Calu3 (cell line): ENCODE measurements at regions of chr12 and their contacts with region 1.

Region 1: DNA sequence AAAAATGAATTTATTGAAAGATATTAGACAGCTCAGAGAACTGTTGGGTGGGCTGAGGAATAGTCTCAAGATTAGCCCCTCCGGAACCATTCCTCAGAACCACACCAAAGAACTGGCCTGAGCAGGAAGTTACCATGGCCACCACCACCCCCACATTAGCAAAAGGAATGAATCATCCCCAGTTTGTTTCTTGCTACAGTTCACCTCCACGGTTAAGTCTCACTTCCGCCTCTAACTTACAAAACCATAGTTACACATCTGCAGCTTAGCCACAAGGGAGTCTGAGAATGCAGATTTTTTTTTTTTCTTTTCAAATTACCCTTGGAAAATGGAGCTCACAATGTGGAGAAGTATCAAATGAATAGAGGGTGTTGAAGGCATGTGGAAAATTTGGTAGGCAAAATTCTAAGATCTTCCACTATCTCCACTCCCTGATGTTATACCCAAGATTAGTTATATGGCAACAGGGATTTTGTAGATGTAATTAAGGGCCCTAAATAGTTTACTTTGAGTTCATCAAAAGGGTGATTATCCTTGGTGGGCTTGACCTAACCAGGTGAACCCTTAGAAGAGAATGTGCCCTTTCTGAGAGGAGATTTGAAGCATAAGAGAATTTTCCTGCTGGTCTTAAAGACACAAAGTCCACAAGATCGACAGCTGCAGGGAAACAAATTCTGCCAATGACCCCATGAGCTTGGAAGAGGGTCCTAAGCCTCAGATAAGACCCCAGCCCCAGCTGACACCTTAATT is 129.8 kb upstream of the KRR1 start:
- DNase-seq: peak; percentile 83
- H3K4me3 Mint-ChIP-seq: peak overlapping the region; percentile 46
- H3K27ac Mint-ChIP-seq: peak overlapping the region; percentile 99
- H3K4me1 Mint-ChIP-seq: peaks cover 72% of the 10 kb centered on the region
- H3K27me3 Mint-ChIP-seq: no peaks in the 10 kb centered on the region
- CTCF ChIP-seq: no peak

Region 2: GRCh38 chr12:75656650-75657049 is 15.4 kb after region 1 on chr12:
- CTCF ChIA-PET with region 1: interaction called, 6 read pairs
- intact Hi-C with region 1: loop called (anchors 2 kb)
- DNase-seq: peak; percentile 85
- H3K4me3 Mint-ChIP-seq: no peak overlapping the region
- H3K27ac Mint-ChIP-seq: no peak overlapping the region
- H3K4me1 Mint-ChIP-seq: peaks cover 43% of the 10 kb centered on the region
- H3K27me3 Mint-ChIP-seq: no peaks in the 10 kb centered on the region
- CTCF ChIP-seq: no peak

Region 3: DNA sequence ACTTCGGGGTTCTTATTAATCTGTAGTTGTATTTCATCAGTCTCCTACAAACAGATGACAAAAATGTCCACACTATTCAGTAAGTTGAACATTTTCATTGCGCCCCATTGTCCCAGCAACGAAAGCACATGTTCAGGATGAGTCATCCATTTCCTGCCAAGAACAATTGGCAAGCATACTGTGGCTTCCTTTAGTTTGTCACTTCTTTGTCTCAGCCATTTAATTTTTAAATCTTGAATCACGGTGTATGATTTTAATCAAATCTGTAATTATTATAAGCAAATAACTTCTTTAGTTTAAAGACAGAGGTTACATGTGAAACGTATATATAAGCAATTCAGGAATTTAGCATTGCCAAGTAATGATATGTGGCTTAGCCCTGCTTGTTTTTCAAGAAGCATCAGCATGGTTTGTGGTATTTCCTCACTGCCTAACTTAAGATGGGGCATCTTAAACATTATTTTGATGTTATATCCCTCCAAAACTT is 81.6 kb after region 1 on chr12:
- CTCF ChIA-PET with region 1: interaction called, 3 read pairs
- intact Hi-C with region 1: loop called (anchors 2 kb)
- DNase-seq: peak; percentile 48
- H3K4me3 Mint-ChIP-seq: peak overlapping the region; percentile 3
- H3K27ac Mint-ChIP-seq: peak overlapping the region; percentile 94
- H3K4me1 Mint-ChIP-seq: peaks cover 64% of the 10 kb centered on the region
- H3K27me3 Mint-ChIP-seq: no peaks in the 10 kb centered on the region
- CTCF ChIP-seq: no peak

Region 4: GRCh38 chr12:75944097-75944904 is 303.1 kb after region 1 on chr12:
- CTCF ChIA-PET with region 1: interaction called, 3 read pairs
- intact Hi-C with region 1: loop called (anchors 5 kb)
- DNase-seq: peak; percentile 44
- H3K4me3 Mint-ChIP-seq: peak overlapping the region; percentile 57
- H3K27ac Mint-ChIP-seq: peak overlapping the region; percentile 87
- H3K4me1 Mint-ChIP-seq: peaks cover 34% of the 10 kb centered on the region
- H3K27me3 Mint-ChIP-seq: no peaks in the 10 kb centered on the region
- CTCF ChIP-seq: no peak